Dorsolateral prefrontal cortex (tissue), 120 donors: ENCODE measurements at regions of chr11 and their contacts with region 1.

Region 1: GRCh38 chr11:115112754-115113153 is 391.5 kb downstream of the CADM1 start:
- DNase-seq: no peak
- H3K4me3 ChIP-seq: no peak overlapping the region
- H3K27ac ChIP-seq: no peak overlapping the region
- H3K27me3 ChIP-seq: no peaks in the 10 kb centered on the region
- CTCF ChIP-seq: no peak

Region 2: GRCh38 chr11:114384487-114384886 is 728.3 kb before region 1 on chr11:
- intact Hi-C with region 1: loop called in 1 of 2 experiments (anchors 10 kb)
- DNase-seq: no peak
- H3K4me3 ChIP-seq: no peak overlapping the region
- H3K27ac ChIP-seq: no peak overlapping the region
- H3K27me3 ChIP-seq: no peaks in the 10 kb centered on the region
- CTCF ChIP-seq: no peak

Region 3: GRCh38 chr11:115488945-115489344 is 376.2 kb after region 1 on chr11:
- intact Hi-C with region 1: no loop called
- DNase-seq: no peak
- H3K4me3 ChIP-seq: no peak overlapping the region
- H3K27ac ChIP-seq: no peak overlapping the region
- H3K27me3 ChIP-seq: no peaks in the 10 kb centered on the region
- CTCF ChIP-seq: no peak